ENCODE measurements at regions of chr2 and their contacts with region 1.

Region 1: DNA sequence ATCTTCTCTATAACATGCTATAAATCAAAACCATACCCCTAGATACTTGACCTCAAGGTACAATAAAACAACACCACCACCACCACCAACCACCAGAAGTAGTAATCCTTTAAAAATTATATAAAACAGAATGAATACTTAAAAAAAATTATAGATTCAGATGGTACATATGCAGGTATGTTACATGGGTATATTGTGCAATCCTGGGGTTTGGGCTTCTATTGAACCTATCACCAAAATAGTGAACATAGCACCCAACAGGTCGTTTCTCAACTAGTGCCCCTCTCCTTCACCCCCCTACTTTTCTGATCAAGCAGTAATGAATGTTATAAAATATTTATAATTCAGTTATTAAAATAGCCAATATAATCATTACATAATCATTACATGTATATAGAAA is 71.1 kb upstream of the CHN1 start:
- DNase-seq: no peak
- ATAC-seq: no peak
- H3K4me3 ChIP-seq: no peak overlapping the region
- H3K27ac ChIP-seq: no peak overlapping the region
- H3K4me1 ChIP-seq: no peaks in the 10 kb centered on the region
- H3K27me3 ChIP-seq: no peaks in the 10 kb centered on the region
- CTCF ChIP-seq: no peak
- POLR2A ChIP-seq: no peak
- RAD21 ChIP-seq: no peak

Region 2: DNA sequence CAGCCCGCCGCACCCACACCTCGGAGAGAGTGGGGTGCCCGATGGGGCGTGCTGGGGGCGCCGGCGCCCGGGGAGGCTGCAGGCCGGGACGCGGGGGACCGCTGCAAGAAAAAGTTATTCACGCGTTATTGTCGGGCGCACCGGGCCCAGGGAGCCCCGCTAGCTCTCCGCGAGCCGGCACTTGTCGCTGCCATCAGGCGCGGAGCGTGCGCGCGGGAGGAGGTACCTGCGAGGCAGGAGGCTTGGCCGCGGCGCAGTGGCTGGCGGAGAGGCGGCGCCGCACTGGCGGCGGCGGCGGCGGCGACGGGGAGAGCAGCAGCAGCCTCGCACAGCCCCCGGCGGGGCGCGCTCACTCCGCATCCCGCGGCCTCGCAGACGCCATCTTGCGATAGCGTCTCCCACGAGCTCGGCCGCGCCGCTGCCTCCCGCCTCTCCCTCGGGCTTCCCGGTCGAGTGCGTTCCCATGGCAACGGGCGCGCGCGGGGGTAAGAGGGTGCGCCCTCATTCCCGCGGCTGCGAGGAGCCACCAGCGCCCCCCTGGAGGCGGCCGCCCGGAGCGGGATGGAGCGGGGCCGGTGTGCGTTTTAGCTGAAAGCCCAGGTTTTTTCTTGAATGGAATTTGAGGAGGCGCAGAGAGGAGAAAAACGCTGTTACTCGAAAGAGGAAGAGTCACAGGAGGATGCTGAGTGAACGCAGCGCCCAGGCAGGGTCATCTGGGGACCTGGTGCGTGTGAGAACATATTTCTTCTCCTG is 71.1 kb before region 1 on chr2 and contains the start of gene CHN1:
- CTCF ChIA-PET with region 1: no interaction called
- POLR2A ChIA-PET with region 1: no interaction called
- dilution Hi-C with region 1: no loop called
- in situ Hi-C with region 1: no loop called
- intact Hi-C with region 1: loop called (anchors 5 kb)
- DNase-seq: peak; percentile 69
- ATAC-seq: peak; percentile 95
- H3K4me3 ChIP-seq: peak within 1 kb of the TSS; percentile 66
- H3K27ac ChIP-seq: no peak within 1 kb of the TSS; the same call in 1 of the 2 replicates
- H3K4me1 ChIP-seq: no peaks in the 10 kb centered on the region
- H3K27me3 ChIP-seq: peaks cover 22% of the 10 kb centered on the region
- CTCF ChIP-seq: 0 out of 2 replicates have a peak, but pooled peaks have one; percentile 4
- POLR2A ChIP-seq: no peak
- RAD21 ChIP-seq: 0 out of 2 replicates have a peak, but pooled peaks have one; percentile 8
- total RNA-seq, gene CHN1: 54.4 and 58.4 TPM in 2 replicates

Region 3: DNA sequence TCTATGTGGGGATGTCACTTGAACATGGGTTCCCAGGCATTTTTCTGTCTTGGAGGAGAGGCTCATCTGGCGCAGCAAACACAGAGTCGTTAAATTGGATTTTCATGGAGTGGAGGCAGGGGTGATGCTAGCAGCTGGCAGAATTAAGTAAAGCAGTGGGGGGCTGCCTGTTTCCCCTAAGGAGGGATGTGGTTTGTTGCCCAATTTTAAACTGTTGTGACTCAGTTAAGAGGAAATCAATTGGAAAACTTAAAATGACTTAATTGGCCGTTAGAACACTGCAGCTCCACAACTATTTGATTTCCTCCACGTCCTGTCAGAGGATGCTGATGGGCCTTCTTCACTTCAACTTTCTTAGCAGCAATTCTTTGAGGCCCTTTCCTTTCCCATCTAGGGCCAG is 459.4 kb after region 1 on chr2:
- CTCF ChIA-PET with region 1: no interaction called
- POLR2A ChIA-PET with region 1: no interaction called
- dilution Hi-C with region 1: no loop called
- in situ Hi-C with region 1: no loop called
- intact Hi-C with region 1: no loop called
- DNase-seq: no peak
- ATAC-seq: no peak
- H3K4me3 ChIP-seq: no peak overlapping the region
- H3K27ac ChIP-seq: no peak overlapping the region
- H3K4me1 ChIP-seq: no peaks in the 10 kb centered on the region
- H3K27me3 ChIP-seq: no peaks in the 10 kb centered on the region
- CTCF ChIP-seq: no peak
- POLR2A ChIP-seq: no peak
- RAD21 ChIP-seq: no peak

Region 4: GRCh38 chr2:176212276-176212675 is 1136.0 kb after region 1 on chr2:
- CTCF ChIA-PET with region 1: no interaction called
- POLR2A ChIA-PET with region 1: no interaction called
- dilution Hi-C with region 1: no loop called
- in situ Hi-C with region 1: no loop called
- intact Hi-C with region 1: no loop called
- DNase-seq: no peak
- ATAC-seq: no peak
- H3K4me3 ChIP-seq: no peak overlapping the region
- H3K27ac ChIP-seq: no peak overlapping the region
- H3K4me1 ChIP-seq: no peaks in the 10 kb centered on the region
- H3K27me3 ChIP-seq: no peaks in the 10 kb centered on the region
- CTCF ChIP-seq: no peak
- POLR2A ChIP-seq: no peak
- RAD21 ChIP-seq: no peak